IMR-90 (cell line): ENCODE measurements at regions of chr3 and their contacts with region 1.

Region 1: DNA sequence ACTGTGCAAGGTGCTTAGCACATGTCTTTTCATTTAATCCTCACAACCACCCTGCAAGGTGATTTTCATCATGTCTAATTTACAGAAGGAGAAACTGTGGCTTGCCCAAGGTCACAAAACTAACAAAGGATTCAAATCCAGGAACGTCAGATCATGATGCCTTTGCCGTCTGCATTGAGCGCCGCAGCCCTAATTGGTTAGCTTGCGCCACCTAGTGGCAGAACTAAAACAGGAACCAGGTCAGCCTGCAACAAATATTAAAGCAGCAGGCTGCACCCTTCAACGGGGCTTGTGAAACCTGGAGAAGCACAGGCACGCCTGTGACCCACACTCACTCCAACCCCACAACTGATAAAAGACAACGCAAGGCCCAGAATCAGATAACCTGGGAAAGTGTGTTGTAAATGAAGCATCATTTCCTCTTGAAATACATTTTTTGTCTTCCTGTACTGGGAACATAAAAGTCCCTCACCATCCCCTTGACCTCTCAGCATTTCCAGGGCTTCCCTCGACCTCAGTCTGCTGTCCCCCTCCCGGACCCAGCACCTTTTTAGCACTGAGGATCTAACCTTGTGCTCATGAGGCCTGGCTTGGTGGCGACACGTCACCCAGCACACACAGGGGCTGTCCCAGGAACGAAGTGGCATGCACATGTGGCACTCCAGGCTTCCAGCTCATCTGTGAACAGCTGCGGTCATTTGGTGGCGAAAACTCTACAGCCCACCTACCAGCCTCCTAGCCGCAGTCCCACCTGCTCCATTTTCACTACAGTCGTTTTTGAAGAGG is 17.3 kb downstream of the DPH3 start:
- DNase-seq: peak; percentile 84
- ATAC-seq: peak; percentile 88
- H3K4me3 ChIP-seq: no peak overlapping the region
- H3K27ac ChIP-seq: no peak overlapping the region
- H3K4me1 ChIP-seq: peaks cover 13% of the 10 kb centered on the region
- H3K27me3 ChIP-seq: no peaks in the 10 kb centered on the region
- CTCF ChIP-seq: peak; percentile 96
- POLR2A ChIP-seq: peak; percentile 50
- RAD21 ChIP-seq: peak; percentile 99

Region 2: DNA sequence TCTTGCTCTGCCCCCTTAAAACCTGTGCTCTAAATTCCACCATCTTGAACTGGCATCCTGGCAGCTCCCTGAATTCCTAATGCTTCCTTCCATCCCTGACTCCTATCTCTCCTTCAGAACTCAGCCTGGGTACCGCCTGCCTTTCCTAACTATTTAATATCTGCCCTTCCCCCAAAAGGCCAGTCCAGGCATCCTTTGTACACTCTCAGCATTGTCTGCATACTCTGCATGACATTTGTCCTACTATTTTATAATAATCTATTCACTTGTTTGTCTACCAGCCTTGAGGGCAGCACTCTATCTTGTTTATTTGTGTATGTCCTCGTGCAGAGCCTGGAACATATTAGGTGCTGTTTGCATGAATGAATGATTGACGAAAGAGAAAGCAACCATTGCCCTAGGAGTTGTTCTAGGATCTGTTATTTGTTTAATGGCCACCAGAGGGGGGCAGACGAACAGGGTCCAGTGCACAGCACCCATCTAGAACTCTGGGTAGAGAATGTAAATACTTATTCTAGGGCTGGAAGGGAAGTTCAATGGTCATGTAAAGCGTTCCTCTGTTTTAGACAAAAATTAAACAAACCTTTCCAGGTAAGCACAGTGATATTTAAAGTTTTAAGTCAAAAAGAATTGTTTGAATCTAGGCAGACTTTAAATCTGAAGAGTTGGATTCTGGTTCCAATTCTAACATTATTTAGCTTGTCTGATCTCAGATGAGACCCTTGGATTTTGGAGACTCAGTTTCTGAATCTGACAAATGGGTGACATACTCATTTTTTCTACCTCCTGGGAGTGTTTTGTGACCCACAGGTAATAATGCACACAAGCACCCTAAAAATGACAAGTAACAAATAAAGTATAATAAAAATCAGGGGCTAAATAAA is 198.8 kb before region 1 on chr3:
- CTCF ChIA-PET with region 1: interaction called, 6 read pairs
- POLR2A ChIA-PET with region 1: no interaction called
- dilution Hi-C with region 1: no loop called
- in situ Hi-C with region 1: loop called (anchors 5 kb)
- intact Hi-C with region 1: loop called (anchors 1 kb)
- DNase-seq: peak; percentile 81
- ATAC-seq: peak; percentile 94
- H3K4me3 ChIP-seq: no peak overlapping the region; the same call in 1 of the 2 replicates
- H3K27ac ChIP-seq: peak overlapping the region; percentile 28; the same call in 1 of the 2 replicates
- H3K4me1 ChIP-seq: peaks cover 12% of the 10 kb centered on the region
- H3K27me3 ChIP-seq: no peaks in the 10 kb centered on the region
- CTCF ChIP-seq: peak; percentile 93
- POLR2A ChIP-seq: peak; percentile 67
- RAD21 ChIP-seq: peak; percentile 100

Region 3: GRCh38 chr3:16266714-16267113 is 19.2 kb after region 1 on chr3:
- CTCF ChIA-PET with region 1: no interaction called
- POLR2A ChIA-PET with region 1: no interaction called
- dilution Hi-C with region 1: no loop called
- in situ Hi-C with region 1: no loop called
- intact Hi-C with region 1: no loop called
- DNase-seq: no peak
- ATAC-seq: no peak
- H3K4me3 ChIP-seq: no peak overlapping the region
- H3K27ac ChIP-seq: no peak overlapping the region
- H3K4me1 ChIP-seq: no peaks in the 10 kb centered on the region
- H3K27me3 ChIP-seq: no peaks in the 10 kb centered on the region
- CTCF ChIP-seq: no peak
- POLR2A ChIP-seq: no peak
- RAD21 ChIP-seq: no peak